A549 (cell line): ENCODE measurements at regions of chr9 and their contacts with region 1.

Region 1: GRCh38 chr9:33374634-33375213 is 27.6 kb downstream of the AQP7 start:
- DNase-seq: peak; percentile 77 to 78
- ATAC-seq: peak; percentile 77 to 88
- H3K4me3 ChIP-seq: no peak overlapping the region
- H3K27ac ChIP-seq: 0 out of 6 replicates have a peak overlapping the region, but pooled peaks of 1 of the 2 experiments have one; percentile 24
- H3K4me1 ChIP-seq: peaks cover 4% of the 10 kb centered on the region; the same call in 1 of the 3 replicates
- CTCF ChIP-seq: peak; percentile 90
- EP300 ChIP-seq: no peak
- POLR2A ChIP-seq: no peak
- RAD21 ChIP-seq: peak; percentile 80 to 84

Region 2: GRCh38 chr9:33159760-33160127 is 215.0 kb before region 1 on chr9:
- CTCF ChIA-PET with region 1: no interaction called
- POLR2A ChIA-PET with region 1: no interaction called
- DNase-seq: peak in 1 of 2 experiments; percentile 66
- ATAC-seq: peak in 1 of 2 experiments; percentile 3; a peak in 2 of 6 replicates
- H3K4me3 ChIP-seq: peak overlapping the region; percentile 32
- H3K27ac ChIP-seq: peak overlapping the region; percentile 95 to 97
- H3K4me1 ChIP-seq: peaks cover 90% of the 10 kb centered on the region
- CTCF ChIP-seq: no peak
- EP300 ChIP-seq: no peak
- POLR2A ChIP-seq: no peak
- RAD21 ChIP-seq: no peak

Region 3: DNA sequence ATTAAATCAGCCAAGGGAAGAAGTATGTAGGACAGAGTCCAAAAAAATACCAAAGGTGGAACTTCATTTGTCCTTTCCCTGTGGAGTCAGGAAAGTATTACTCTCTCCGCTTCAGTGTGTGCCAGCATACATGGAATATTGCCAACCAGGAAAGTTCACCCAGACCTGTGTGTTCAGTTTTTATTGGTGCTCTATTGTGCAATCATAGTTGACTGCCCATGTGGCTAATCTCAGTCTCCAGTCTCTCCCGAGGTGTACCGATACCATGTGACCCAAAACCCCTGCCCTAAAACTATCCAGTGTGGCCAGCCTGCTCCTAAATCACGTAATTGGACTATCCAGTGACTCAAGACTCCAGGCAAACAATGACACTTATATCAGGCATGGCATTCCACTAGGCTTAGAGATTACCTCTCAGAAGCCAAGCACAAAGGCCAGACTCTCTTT is 45.6 kb before region 1 on chr9:
- CTCF ChIA-PET with region 1: interaction called, 32 read pairs
- POLR2A ChIA-PET with region 1: no interaction called
- DNase-seq: peak; percentile 81 to 97
- ATAC-seq: peak; percentile 97 to 99
- H3K4me3 ChIP-seq: no peak overlapping the region
- H3K27ac ChIP-seq: peak overlapping the region; percentile 85 to 90
- H3K4me1 ChIP-seq: peaks cover 42% of the 10 kb centered on the region
- CTCF ChIP-seq: no peak
- EP300 ChIP-seq: peak; percentile 78 to 87; a peak in 3 of 5 replicates
- POLR2A ChIP-seq: no peak
- RAD21 ChIP-seq: peak in 1 of 2 experiments; percentile 23; a peak in 1 of 5 replicates

Region 4: DNA sequence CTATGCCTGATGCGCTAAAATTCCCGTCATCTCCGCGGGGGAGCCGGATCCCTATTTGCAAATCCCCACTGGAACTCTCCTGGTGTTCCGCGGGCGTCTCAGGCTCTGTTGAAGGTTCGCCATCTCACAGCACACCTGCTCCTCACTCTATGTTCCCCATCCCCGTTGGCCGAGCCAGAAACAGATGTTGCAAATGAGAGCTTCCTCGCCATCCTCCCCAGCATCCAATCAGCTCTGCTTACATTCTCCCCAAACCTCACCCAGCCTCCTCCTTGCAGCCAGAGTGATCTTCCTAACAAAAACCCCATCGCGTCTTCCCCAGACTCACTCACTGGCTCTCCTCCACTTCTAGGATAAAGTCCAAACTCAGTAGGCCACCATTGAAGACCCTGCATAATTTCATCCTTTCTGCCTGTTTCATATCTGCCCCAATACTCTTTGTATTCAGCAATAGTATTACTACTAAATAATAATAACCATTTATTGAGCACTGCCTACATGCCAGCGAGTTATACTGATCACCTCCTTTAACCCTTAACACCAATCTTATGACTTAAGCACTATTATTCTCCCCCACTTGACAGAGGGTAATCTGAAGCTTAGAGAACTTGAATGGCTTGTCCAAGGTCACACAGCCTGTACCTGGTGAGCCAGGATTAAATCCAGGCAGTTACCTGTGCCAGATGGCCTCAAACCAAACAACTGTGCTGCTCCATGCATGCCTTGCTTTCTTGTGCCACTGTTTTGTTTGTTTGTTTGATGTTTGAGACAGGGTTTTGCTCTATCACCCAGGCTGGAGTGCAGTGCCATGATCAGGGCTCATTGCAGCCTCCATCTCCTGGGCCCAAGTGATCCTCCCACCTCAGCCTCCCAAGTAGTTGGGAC is 13.6 kb after region 1 on chr9:
- CTCF ChIA-PET with region 1: interaction called, 24 read pairs
- POLR2A ChIA-PET with region 1: no interaction called
- DNase-seq: no peak
- ATAC-seq: no peak; a peak in 1 of 6 replicates
- H3K4me3 ChIP-seq: no peak overlapping the region
- H3K27ac ChIP-seq: no peak overlapping the region
- H3K4me1 ChIP-seq: peaks cover 22% of the 10 kb centered on the region
- CTCF ChIP-seq: no peak
- EP300 ChIP-seq: no peak
- POLR2A ChIP-seq: no peak
- RAD21 ChIP-seq: no peak

Region 5: GRCh38 chr9:33404788-33405362 is 30.2 kb after region 1 on chr9:
- CTCF ChIA-PET with region 1: interaction called, 37 read pairs
- POLR2A ChIA-PET with region 1: no interaction called
- DNase-seq: no peak
- ATAC-seq: peak; percentile 42 to 67; a peak in 3 of 6 replicates
- H3K4me3 ChIP-seq: no peak overlapping the region
- H3K27ac ChIP-seq: peak overlapping the region; percentile 27 to 49; a peak in 4 of 6 replicates
- H3K4me1 ChIP-seq: peaks cover 30% of the 10 kb centered on the region
- CTCF ChIP-seq: no peak
- EP300 ChIP-seq: no peak
- POLR2A ChIP-seq: no peak
- RAD21 ChIP-seq: no peak

Region 6: GRCh38 chr9:33446946-33447798 is 72.4 kb after region 1 on chr9 and contains the start of gene AQP3:
- CTCF ChIA-PET with region 1: interaction called, 46 read pairs
- POLR2A ChIA-PET with region 1: interaction called, 3 read pairs
- DNase-seq: peak; percentile 63 to 80
- ATAC-seq: peak; percentile 88 to 92
- H3K4me3 ChIP-seq: peak within 1 kb of the TSS; percentile 42
- H3K27ac ChIP-seq: peak within 1 kb of the TSS; percentile 43 to 80
- H3K4me1 ChIP-seq: peaks cover 36% of the 10 kb centered on the region
- CTCF ChIP-seq: peak; percentile 51
- EP300 ChIP-seq: no peak
- POLR2A ChIP-seq: peak; percentile 14; the same call in 1 of the 2 replicates
- RAD21 ChIP-seq: peak; percentile 4 to 55; a peak in 4 of 5 replicates
- polyA plus RNA-seq, gene AQP3: 18.8 and 21.7 TPM in 2 replicates

Region 7: DNA sequence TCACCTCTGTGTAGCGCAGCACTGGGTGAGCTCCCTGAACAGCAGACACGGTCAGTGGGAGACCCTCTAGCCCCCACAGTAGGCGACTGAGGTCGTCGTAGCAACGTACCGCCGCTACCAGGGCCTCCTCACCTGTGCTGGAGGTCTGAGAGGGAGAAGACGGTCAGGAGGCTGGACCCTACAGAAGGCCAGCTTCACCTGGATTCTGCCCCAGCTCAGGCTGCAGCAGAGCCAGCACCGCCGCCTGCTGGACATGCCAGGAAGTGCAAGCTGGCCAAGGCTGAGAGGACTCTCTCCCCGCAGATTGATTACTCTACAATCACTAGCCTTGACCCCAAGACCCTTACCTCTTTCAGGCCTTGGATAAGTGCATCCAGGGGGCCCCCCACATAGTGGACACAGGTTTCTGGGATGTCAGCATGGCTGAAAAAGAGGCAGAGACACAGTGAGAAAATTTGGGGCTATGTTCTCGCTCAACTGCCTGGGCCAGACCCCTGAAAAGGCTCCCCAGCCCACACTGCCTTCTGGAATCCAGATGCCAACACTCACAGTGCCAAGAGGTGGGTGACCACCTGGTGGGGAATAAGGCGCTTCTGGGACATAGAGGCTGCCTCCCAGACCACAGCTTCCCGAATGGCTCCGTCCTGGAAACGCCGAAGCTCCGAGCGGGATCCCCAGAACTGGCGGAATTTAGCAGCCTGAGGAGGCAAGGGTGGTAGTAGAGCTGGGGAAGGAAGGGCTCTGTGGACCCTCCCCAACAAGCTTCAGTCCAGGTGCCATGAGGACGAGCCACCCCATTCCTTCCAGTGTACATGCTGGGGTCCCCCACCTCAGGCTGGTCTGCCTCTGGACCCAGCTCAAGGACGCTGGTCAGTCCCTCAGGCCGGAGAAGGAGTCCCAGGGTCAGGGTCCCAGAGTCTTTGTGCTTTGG is 92.1 kb after region 1 on chr9:
- CTCF ChIA-PET with region 1: interaction called, 147 read pairs
- POLR2A ChIA-PET with region 1: interaction called, 4 read pairs
- DNase-seq: peak; percentile 55 to 75
- ATAC-seq: peak; percentile 74 to 90
- H3K4me3 ChIP-seq: no peak overlapping the region
- H3K27ac ChIP-seq: peak overlapping the region in 1 of 2 experiments; percentile 57; a peak in 2 of 6 replicates
- H3K4me1 ChIP-seq: peaks cover 4% of the 10 kb centered on the region
- CTCF ChIP-seq: peak; percentile 88
- EP300 ChIP-seq: no peak
- POLR2A ChIP-seq: no peak
- RAD21 ChIP-seq: peak; percentile 90 to 92

Region 8: DNA sequence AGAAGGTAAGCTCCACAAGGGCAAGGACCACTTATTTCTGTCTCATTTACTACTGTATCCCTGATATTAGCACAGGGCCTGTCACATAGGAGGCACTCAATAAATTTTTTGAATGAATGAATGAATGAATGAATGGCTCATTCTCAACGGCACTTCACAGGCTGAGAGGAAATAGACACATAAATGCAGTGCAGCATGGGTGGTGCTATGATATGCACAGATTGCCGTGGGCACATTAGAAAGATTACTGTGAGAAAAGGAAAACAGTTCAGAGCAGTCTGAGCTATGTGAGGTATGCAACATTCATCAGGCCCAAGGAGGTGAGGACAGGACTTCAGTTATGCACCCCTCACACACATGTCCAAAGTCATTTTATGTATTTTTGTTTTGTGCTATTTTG is 105.4 kb after region 1 on chr9:
- CTCF ChIA-PET with region 1: interaction called, 31 read pairs
- POLR2A ChIA-PET with region 1: no interaction called
- DNase-seq: no peak
- ATAC-seq: no peak
- H3K4me3 ChIP-seq: no peak overlapping the region
- H3K27ac ChIP-seq: no peak overlapping the region
- H3K4me1 ChIP-seq: no peaks in the 10 kb centered on the region
- CTCF ChIP-seq: no peak
- EP300 ChIP-seq: no peak
- POLR2A ChIP-seq: no peak
- RAD21 ChIP-seq: no peak

Region 9: DNA sequence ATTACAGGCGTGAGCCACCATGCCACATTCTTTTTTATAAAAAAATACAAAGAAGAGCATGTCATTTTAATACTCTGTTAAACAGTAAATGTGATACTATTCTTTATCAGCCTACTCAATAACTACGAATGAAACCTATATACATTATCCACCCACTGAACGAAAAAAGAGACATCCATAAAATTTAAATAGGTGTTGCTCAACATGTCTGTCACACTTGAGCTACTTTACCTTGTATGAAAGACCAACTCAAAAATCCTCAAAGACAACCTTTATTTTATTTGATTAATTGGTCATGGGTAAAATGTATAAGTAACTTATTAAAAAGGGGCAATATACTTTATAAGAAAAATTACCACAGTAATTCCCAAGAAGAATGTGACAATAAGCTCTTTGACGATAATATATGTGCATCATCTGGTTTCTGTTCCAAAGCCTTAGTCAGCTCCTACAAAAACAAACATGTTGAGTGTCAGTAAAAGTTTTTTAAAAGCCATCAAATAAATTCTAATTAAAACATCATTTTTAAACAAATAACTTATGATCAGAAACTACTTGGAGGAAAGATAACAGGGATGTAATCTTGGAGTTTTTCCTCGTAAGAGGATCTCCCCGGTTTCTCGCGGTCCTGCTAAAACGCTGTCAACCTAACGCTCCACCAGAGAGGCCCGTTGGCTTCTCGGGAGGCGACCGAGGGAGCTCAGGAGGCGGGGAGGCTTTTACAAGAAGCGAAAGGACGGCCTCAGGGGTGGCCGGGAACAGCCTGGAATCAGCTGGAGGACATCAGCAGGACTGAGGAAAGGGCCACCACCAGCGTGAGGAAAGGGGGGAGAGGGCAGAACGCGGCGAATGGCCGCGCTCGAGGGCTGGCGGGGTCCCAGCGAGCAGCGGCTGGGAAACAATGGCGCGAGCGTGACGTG is 135.8 kb after region 1 on chr9:
- CTCF ChIA-PET with region 1: no interaction called
- POLR2A ChIA-PET with region 1: no interaction called
- DNase-seq: peak; percentile 51 to 67
- ATAC-seq: peak; percentile 81 to 82
- H3K4me3 ChIP-seq: peak overlapping the region; percentile 45
- H3K27ac ChIP-seq: peak overlapping the region; percentile 87 to 95
- H3K4me1 ChIP-seq: peaks cover 50% of the 10 kb centered on the region
- CTCF ChIP-seq: no peak
- EP300 ChIP-seq: no peak
- POLR2A ChIP-seq: peak; percentile 82
- RAD21 ChIP-seq: no peak

Region 10: GRCh38 chr9:33628865-33629410 is 254.2 kb after region 1 on chr9:
- CTCF ChIA-PET with region 1: no interaction called
- POLR2A ChIA-PET with region 1: no interaction called
- DNase-seq: no peak
- ATAC-seq: peak; percentile 28 to 46; a peak in 4 of 6 replicates
- H3K4me3 ChIP-seq: no peak overlapping the region
- H3K27ac ChIP-seq: no peak overlapping the region
- H3K4me1 ChIP-seq: no peaks in the 10 kb centered on the region
- CTCF ChIP-seq: no peak
- EP300 ChIP-seq: no peak
- POLR2A ChIP-seq: no peak
- RAD21 ChIP-seq: no peak